Dendritic cell treated with granulocyte-macrophage colony-stimulating factor and Interleukin-4, amounts not matched to agents 40 ng/mL and 50 ng/mL, for 4 days (primary cell): ENCODE measurements at regions of chr14 and their contacts with region 1.

Region 1: DNA sequence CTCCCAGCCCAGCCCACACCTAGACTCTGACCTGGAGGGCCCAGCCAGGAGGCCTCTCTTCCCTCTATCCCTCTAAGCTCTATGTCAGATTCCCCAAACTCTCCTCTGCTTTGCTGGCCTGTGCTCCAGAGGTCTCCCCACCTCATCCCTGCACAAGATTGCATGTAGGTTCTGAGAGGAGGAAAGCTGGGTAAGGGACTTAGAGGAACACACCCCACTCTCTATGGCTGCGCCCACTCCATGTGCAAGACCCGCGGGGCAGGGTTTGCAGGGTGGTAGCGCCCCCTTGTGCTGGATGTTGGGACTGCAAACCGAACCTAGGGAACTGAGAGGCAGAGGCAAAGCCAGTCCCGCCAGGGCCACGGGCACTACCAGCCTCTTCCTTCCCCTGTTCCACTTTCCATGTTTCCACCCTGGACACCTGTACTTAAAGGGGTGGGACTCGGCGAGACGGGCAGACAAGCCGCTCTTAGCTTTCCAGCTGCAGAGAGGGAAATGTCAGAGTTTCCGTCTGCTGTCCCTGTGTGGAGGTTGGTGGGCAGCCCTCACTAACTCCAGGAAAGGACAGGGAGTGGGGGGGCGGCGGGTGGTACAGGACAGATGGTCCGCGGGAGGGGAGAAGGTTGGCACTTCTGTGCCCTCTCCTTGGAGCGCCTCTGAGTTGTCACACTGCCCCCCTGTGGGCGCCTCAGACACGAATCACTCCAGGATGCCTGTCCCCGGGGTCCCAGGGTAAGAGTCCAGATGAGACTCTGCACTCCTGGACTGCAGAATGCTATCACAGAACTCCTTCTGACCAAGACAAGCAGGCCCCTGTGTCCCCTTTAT is 16.8 kb downstream of the MMP14 start:
- H3K4me3 Mint-ChIP-seq: peak overlapping the region; percentile 69
- H3K27ac Mint-ChIP-seq: peak overlapping the region; percentile 74
- H3K4me1 Mint-ChIP-seq: peaks cover 53% of the 10 kb centered on the region
- H3K27me3 Mint-ChIP-seq: peaks cover 10% of the 10 kb centered on the region

Region 2: GRCh38 chr14:22570132-22570949 is 282.8 kb before region 1 on chr14:
- intact Hi-C with region 1: loop called (anchors 1 kb)
- H3K4me3 Mint-ChIP-seq: no peak overlapping the region
- H3K27ac Mint-ChIP-seq: no peak overlapping the region
- H3K4me1 Mint-ChIP-seq: peaks cover 17% of the 10 kb centered on the region
- H3K27me3 Mint-ChIP-seq: no peaks in the 10 kb centered on the region

Region 3: GRCh38 chr14:22653012-22653621 is 200.0 kb before region 1 on chr14:
- intact Hi-C with region 1: loop called (anchors 1 kb)
- H3K4me3 Mint-ChIP-seq: no peak overlapping the region
- H3K27ac Mint-ChIP-seq: no peak overlapping the region
- H3K4me1 Mint-ChIP-seq: no peaks in the 10 kb centered on the region
- H3K27me3 Mint-ChIP-seq: peaks cover 8% of the 10 kb centered on the region

Region 4: GRCh38 chr14:22737052-22737451 is 116.1 kb before region 1 on chr14:
- intact Hi-C with region 1: no loop called
- H3K4me3 Mint-ChIP-seq: no peak overlapping the region
- H3K27ac Mint-ChIP-seq: no peak overlapping the region
- H3K4me1 Mint-ChIP-seq: peaks cover 9% of the 10 kb centered on the region
- H3K27me3 Mint-ChIP-seq: no peaks in the 10 kb centered on the region

Region 5: GRCh38 chr14:22781586-22781991 is 71.6 kb before region 1 on chr14:
- intact Hi-C with region 1: loop called (anchors 1 kb)
- H3K4me3 Mint-ChIP-seq: no peak overlapping the region
- H3K27ac Mint-ChIP-seq: peak overlapping the region; percentile 90
- H3K4me1 Mint-ChIP-seq: peaks cover 73% of the 10 kb centered on the region
- H3K27me3 Mint-ChIP-seq: no peaks in the 10 kb centered on the region